ENCODE measurements at regions of chrX and their contacts with region 1.

Region 1: DNA sequence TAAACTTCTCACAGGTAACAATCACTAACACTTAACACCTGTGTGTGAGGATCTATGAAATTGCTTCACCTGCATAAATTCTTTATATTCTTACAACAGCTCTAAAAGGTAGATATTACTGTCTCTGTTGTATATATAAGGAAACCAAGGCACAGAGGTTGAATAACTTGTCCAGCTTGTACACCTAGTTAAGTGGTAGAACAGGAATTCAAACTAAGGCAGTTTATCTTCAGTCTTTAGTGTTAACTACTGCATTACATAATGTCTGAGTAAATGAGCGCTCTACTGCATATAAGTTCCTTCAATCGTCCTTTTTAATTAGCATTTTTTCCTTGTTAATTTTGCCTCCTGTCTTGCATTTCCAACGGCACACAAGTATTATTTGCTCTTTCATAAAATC is 15.0 kb downstream of the USP9X start:
- DNase-seq: no peak
- H3K4me3 ChIP-seq: no peak overlapping the region
- H3K27ac ChIP-seq: no peak overlapping the region
- H3K4me1 ChIP-seq: peaks cover 15 to 60% (median 42%) of the 10 kb centered on the region in 4 donors
- H3K27me3 ChIP-seq: peaks cover 0 to 5% (median 0%) of the 10 kb centered on the region in 4 donors
- CTCF ChIP-seq: no peak
- EP300 ChIP-seq: no peak
- POLR2A ChIP-seq: no peak

Region 2: GRCh38 chrX:39877905-39878304 is 1222.3 kb before region 1 on chrX:
- intact Hi-C with region 1: no loop called
- DNase-seq: no peak
- H3K4me3 ChIP-seq: no peak overlapping the region
- H3K27ac ChIP-seq: no peak overlapping the region
- H3K4me1 ChIP-seq: no peaks in the 10 kb centered on the region
- H3K27me3 ChIP-seq: no peaks in the 10 kb centered on the region
- CTCF ChIP-seq: no peak
- EP300 ChIP-seq: no peak
- POLR2A ChIP-seq: no peak

Region 3: GRCh38 chrX:40883021-40883619 is 217.1 kb before region 1 on chrX:
- intact Hi-C with region 1: loop called (anchors 5 kb)
- DNase-seq: no peak
- H3K4me3 ChIP-seq: no peak overlapping the region
- H3K27ac ChIP-seq: no peak overlapping the region
- H3K4me1 ChIP-seq: no peaks in the 10 kb centered on the region
- H3K27me3 ChIP-seq: no peaks in the 10 kb centered on the region
- CTCF ChIP-seq: no peak
- EP300 ChIP-seq: no peak
- POLR2A ChIP-seq: no peak

Region 4: DNA sequence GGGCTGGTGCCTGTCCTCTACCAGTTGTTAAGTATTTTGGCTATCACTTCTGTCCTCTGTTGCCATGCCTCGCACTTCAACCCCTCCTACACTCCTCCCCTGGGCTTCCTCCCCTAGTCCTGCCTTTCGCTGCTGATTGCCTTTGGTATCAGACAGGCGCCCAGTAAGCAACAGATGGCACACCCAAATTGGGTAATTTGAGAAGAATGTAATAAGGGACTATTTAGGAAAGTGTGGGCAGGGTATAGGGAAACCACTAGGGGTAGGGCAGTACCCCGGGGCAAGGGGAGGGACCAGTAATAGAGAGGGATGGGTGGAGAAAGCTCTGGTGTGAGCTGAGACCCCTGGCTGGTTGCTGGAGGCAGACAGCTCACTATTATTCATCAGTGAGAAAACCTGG is 187.6 kb before region 1 on chrX:
- intact Hi-C with region 1: no loop called
- DNase-seq: no peak
- H3K4me3 ChIP-seq: no peak overlapping the region
- H3K27ac ChIP-seq: no peak overlapping the region
- H3K4me1 ChIP-seq: no peaks in the 10 kb centered on the region
- H3K27me3 ChIP-seq: peaks cover 0 to 3% (median 0%) of the 10 kb centered on the region in 4 donors
- CTCF ChIP-seq: no peak
- EP300 ChIP-seq: no peak
- POLR2A ChIP-seq: no peak

Region 5: GRCh38 chrX:41233988-41234387 is 133.8 kb after region 1 on chrX:
- intact Hi-C with region 1: no loop called
- DNase-seq: no peak
- H3K4me3 ChIP-seq: no peak overlapping the region
- H3K27ac ChIP-seq: no peak overlapping the region
- H3K4me1 ChIP-seq: no peaks in the 10 kb centered on the region
- H3K27me3 ChIP-seq: no peaks in the 10 kb centered on the region
- CTCF ChIP-seq: no peak
- EP300 ChIP-seq: no peak
- POLR2A ChIP-seq: no peak

Measured in esophagus muscularis mucosa (tissue), 4 donors.